ENCODE measurements at regions of chr15 and their contacts with region 1.

Region 1: DNA sequence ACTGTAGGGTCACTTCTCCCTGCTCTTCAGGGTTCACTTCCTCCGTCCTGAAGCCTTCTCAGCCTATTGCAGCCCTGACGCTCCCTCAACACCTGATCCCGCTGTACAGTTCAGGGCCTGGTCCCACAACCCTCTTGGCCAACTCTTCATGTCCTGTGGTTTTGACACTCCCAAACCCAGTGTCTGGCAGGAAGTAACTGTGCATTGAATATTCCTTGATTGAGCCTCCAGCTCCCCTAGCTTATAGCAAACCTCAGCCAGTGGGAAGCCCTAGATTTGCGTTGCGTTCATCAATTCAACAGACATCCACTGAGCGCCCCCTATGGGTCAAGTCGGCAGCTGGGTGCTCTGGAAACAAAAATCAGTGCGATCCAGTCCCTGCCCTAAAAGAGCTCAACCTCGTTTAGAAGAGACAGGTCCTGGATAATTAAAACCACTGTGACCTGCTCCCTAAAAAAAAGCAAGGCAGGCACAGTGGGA is 13.5 kb downstream of the UBAP1L start:
- DNase-seq: peak; percentile 86
- H3K4me3 ChIP-seq: no peak overlapping the region
- H3K27ac ChIP-seq: peak overlapping the region in 1 of 4 donors; percentile 19
- H3K4me1 ChIP-seq: peaks cover 0 to 23% (median 19%) of the 10 kb centered on the region in 4 donors
- H3K27me3 ChIP-seq: no peaks in the 10 kb centered on the region
- CTCF ChIP-seq: peak; percentile 61 to 88 (median 82)
- EP300 ChIP-seq: no peak
- POLR2A ChIP-seq: no peak

Region 2: GRCh38 chr15:65032801-65033537 is 68.5 kb before region 1 on chr15:
- intact Hi-C with region 1: loop called (anchors 2 kb)
- DNase-seq: peak; percentile 74
- H3K4me3 ChIP-seq: no peak overlapping the region
- H3K27ac ChIP-seq: peak overlapping the region in 1 of 4 donors; percentile 15
- H3K4me1 ChIP-seq: peaks cover 0 to 23% (median 17%) of the 10 kb centered on the region in 4 donors
- H3K27me3 ChIP-seq: no peaks in the 10 kb centered on the region
- CTCF ChIP-seq: peak; percentile 54 to 68 (median 58)
- EP300 ChIP-seq: no peak
- POLR2A ChIP-seq: no peak

Region 3: GRCh38 chr15:65054333-65055200 is 46.9 kb before region 1 on chr15:
- intact Hi-C with region 1: loop called (anchors 1 kb)
- DNase-seq: peak; percentile 91
- H3K4me3 ChIP-seq: no peak overlapping the region
- H3K27ac ChIP-seq: peak overlapping the region; percentile 35 to 76 (median 66)
- H3K4me1 ChIP-seq: peaks cover 0 to 31% (median 25%) of the 10 kb centered on the region in 4 donors
- H3K27me3 ChIP-seq: no peaks in the 10 kb centered on the region
- CTCF ChIP-seq: peak; percentile 90 to 97 (median 95)
- EP300 ChIP-seq: no peak
- POLR2A ChIP-seq: no peak